Endothelial cell of umbilical vein (primary cell): ENCODE measurements at regions of chr11 and their contacts with region 1.

Region 1: GRCh38 chr11:124875943-124876817 is 10.9 kb downstream of the ROBO3 start:
- DNase-seq: peak; percentile 97
- H3K4me3 ChIP-seq: peak overlapping the region; percentile 14 to 49 (median 47)
- H3K27ac ChIP-seq: peak overlapping the region; percentile 65
- H3K4me1 ChIP-seq: peaks cover 21% of the 10 kb centered on the region
- H3K27me3 ChIP-seq: peaks cover 21 to 26% of the 10 kb centered on the region in 2 experiments
- CTCF ChIP-seq: peak; percentile 63 to 74
- POLR2A ChIP-seq: no peak

Region 2: GRCh38 chr11:124644426-124645280 is 231.5 kb before region 1 on chr11:
- CTCF ChIA-PET with region 1: interaction called, 11 read pairs
- POLR2A ChIA-PET with region 1: interaction called, 3 read pairs
- dilution Hi-C with region 1: no loop called
- intact Hi-C with region 1: no loop called
- DNase-seq: peak; percentile 87
- H3K4me3 ChIP-seq: peak overlapping the region in 1 of 3 experiments; percentile 32
- H3K27ac ChIP-seq: peak overlapping the region; percentile 22
- H3K4me1 ChIP-seq: peaks cover 18% of the 10 kb centered on the region
- H3K27me3 ChIP-seq: no peaks in the 10 kb centered on the region
- CTCF ChIP-seq: peak; percentile 56 to 79
- POLR2A ChIP-seq: no peak

Region 3: DNA sequence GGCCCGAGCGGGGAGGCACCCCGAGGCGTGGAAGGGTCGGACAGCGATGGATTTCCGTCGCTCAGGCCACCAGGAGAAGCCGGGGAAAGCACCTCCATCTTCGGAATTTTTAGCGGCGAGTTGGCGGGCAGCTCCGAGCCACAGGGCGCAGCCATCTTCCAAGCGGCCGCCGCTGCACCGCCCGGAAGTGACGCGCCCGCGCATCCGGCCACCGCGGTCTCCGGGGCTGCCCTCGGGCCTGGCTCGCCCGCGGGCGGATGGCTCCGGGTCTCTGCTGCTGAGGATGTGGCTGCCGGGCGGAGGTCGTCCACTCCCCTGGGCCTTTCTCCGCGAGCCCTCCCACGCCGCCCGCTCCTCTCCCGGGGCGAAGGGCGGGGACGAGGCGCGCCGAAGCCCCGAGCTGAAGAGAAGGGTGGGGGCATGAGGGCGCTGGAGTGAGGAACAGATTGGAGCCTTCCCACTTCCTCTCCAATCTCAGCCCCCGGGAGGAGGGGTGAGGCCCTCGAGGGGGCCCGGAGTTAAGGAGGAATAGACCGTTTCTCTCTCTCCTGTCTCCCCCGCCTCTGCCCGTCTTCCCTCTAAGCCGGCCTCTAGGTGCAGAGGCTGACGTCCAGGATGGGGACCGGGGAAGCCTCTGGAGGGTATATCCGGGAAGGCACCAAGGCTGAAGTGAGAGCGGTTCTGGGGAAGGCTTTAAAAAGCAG is 75.8 kb before region 1 on chr11 and contains the start of gene MSANTD2:
- CTCF ChIA-PET with region 1: interaction called, 11 read pairs
- POLR2A ChIA-PET with region 1: no interaction called
- dilution Hi-C with region 1: no loop called
- intact Hi-C with region 1: no loop called
- DNase-seq: peak; percentile 82
- H3K4me3 ChIP-seq: peak within 1 kb of the TSS; percentile 59 to 98 (median 62)
- H3K27ac ChIP-seq: peak within 1 kb of the TSS; percentile 81
- H3K4me1 ChIP-seq: peaks cover 20% of the 10 kb centered on the region
- H3K27me3 ChIP-seq: no peaks in the 10 kb centered on the region
- CTCF ChIP-seq: no peak
- POLR2A ChIP-seq: peak; percentile 81
- total RNA-seq, gene MSANTD2: 17.0 and 23.2 TPM in 2 replicates

Region 4: DNA sequence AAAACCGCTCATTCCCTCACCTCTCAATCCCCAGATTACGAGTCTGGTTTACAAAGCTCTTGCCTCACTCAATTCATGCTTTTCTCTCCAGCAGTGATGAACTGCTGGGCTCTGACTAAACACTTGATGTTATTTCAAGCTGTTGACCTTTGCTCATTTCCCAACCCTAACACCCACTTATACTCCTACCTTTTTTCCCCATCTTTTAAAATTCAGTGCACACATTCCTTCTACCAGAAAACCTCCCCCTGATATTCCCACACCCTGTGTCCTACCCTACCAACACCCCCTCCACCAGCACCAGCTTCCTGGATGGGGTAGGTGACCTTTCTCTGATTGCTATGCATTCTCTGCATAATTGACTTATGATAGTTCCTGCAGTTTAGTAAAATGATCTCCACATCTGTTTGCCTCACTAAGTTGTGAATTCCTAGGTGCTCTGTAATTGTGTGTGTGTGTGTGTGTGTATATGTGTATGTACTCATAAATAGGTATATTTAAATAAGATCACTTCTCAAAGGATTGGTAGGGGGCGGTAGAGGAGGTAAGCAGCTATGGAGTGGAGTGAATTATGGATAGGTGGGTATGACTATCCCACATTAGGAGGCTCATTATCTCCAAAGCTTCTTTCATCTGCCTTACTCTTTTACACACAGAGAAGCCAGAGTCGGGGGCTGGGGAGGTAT is 58.8 kb after region 1 on chr11:
- CTCF ChIA-PET with region 1: interaction called, 10 read pairs
- POLR2A ChIA-PET with region 1: no interaction called
- dilution Hi-C with region 1: no loop called
- intact Hi-C with region 1: no loop called
- DNase-seq: peak; percentile 35
- H3K4me3 ChIP-seq: no peak overlapping the region
- H3K27ac ChIP-seq: no peak overlapping the region
- H3K4me1 ChIP-seq: peaks cover 6% of the 10 kb centered on the region
- H3K27me3 ChIP-seq: peaks cover 0 to 3% of the 10 kb centered on the region in 2 experiments
- CTCF ChIP-seq: no peak
- POLR2A ChIP-seq: no peak

Region 5: DNA sequence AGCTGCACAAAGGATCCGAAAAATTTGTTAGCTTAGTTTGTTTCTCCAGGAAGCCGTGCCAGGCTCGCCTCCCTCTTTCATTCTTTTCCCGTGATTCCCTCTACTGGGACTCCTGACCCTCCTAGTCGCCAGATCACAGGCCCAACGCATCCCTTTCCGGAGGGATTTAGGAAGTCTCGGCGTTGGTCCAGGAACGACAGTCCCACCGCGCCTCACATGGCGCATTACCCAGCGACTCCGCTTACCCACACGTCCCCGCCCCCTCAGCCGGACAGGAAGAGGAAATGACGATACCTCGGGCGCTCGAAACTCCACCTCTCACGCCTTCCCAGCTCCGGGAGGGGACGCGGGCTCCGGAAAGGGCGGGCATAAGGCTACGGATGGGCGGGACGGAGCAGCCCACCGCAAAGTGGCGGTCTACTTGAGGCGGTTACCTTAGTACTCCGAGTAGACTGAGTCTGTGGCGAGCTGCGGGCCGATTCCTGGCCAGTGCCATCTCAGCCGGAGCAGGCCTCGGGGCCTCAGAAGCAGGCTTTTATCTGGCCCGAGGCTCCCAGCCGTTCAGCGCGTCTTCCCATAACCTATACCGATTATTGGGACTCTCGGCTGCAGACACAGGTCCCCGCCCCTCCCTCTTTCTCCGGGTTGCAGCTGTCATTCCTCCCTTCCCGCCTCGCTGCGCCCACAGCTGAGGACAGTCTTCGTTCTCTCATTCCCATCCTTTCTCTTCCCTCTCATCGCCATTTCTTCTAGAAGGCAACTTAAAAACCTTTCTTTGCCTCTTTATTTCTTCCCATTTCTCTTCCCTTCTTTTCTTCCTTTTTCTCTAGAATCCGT is 77.8 kb after region 1 on chr11 and contains the start of gene CCDC15:
- CTCF ChIA-PET with region 1: interaction called, 28 read pairs
- POLR2A ChIA-PET with region 1: interaction called, 17 read pairs
- dilution Hi-C with region 1: no loop called
- intact Hi-C with region 1: loop called (anchors 1 kb)
- DNase-seq: peak; percentile 98
- H3K4me3 ChIP-seq: peak within 1 kb of the TSS; percentile 14 to 66 (median 57)
- H3K27ac ChIP-seq: peak within 1 kb of the TSS; percentile 72
- H3K4me1 ChIP-seq: peaks cover 13% of the 10 kb centered on the region
- H3K27me3 ChIP-seq: peaks cover 0 to 3% of the 10 kb centered on the region in 2 experiments
- CTCF ChIP-seq: no peak
- POLR2A ChIP-seq: peak; percentile 93
- total RNA-seq, gene CCDC15: 3.8 and 4.6 TPM in 2 replicates

Region 6: GRCh38 chr11:125141686-125142535 is 265.7 kb after region 1 on chr11:
- CTCF ChIA-PET with region 1: interaction called, 7 read pairs
- POLR2A ChIA-PET with region 1: no interaction called
- dilution Hi-C with region 1: no loop called
- intact Hi-C with region 1: loop called (anchors 2 kb)
- DNase-seq: peak; percentile 52
- H3K4me3 ChIP-seq: no peak overlapping the region
- H3K27ac ChIP-seq: no peak overlapping the region
- H3K4me1 ChIP-seq: no peaks in the 10 kb centered on the region
- H3K27me3 ChIP-seq: peaks cover 0 to 10% of the 10 kb centered on the region in 2 experiments
- CTCF ChIP-seq: peak; percentile 90 to 95
- POLR2A ChIP-seq: no peak